ENCODE measurements at regions of chr20 and their contacts with region 1.

Region 1: GRCh38 chr20:24755411-24755922 is 193.6 kb upstream of the CST7 start:
- DNase-seq: peak; percentile 53
- H3K4me3 ChIP-seq: no peak overlapping the region
- H3K27ac ChIP-seq: peak overlapping the region; percentile 71
- H3K4me1 ChIP-seq: peaks cover 33% of the 10 kb centered on the region
- H3K27me3 ChIP-seq: no peaks in the 10 kb centered on the region
- CTCF ChIP-seq: no peak

Region 2: GRCh38 chr20:23890859-23891459 is 864.5 kb before region 1 on chr20:
- CTCF ChIA-PET with region 1: no interaction called
- POLR2A ChIA-PET with region 1: no interaction called
- intact Hi-C with region 1: no loop called
- DNase-seq: no peak
- H3K4me3 ChIP-seq: no peak overlapping the region
- H3K27ac ChIP-seq: no peak overlapping the region
- H3K4me1 ChIP-seq: no peaks in the 10 kb centered on the region
- H3K27me3 ChIP-seq: peaks cover 3% of the 10 kb centered on the region
- CTCF ChIP-seq: no peak

Region 3: DNA sequence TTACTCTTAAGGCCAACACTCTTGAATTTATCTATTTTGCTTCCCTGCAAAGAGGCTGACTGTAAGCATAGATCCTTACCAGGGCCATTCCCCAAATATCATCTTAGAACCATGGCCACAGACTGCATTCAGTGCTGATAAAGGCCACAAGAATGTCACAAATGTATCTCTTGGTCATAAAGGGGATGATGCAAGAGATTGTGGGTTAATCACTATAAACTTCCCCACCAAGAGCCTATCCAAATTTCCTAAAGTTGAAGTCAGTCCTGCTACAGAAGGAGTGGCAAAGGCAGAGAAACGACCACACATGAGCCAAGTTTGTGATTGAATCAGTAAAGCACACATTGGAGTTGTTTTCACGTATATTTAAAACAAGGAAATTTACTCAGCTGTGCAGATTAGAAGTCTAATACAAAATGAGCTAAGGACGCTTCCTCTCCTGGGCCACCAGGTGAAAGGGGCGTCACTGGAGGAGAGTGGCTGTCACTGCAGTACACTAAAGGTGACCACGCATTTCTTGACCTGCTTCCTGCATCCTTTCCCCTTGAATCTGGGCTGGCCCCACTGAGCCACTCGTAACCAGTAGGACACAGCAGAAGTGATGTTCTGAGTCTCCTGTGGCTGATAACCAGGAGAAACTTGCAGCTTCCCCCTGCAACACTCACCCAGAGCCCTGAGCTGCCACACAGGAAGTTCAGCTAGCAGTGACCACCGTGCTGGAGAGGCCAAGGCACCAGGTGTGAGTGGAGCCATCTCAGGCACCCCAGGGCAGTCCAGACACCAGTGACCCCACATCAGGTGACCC is 104.1 kb before region 1 on chr20:
- CTCF ChIA-PET with region 1: no interaction called
- POLR2A ChIA-PET with region 1: interaction called, 10 read pairs
- intact Hi-C with region 1: loop called (anchors 1 kb)
- DNase-seq: no peak
- H3K4me3 ChIP-seq: no peak overlapping the region
- H3K27ac ChIP-seq: peak overlapping the region; percentile 94
- H3K4me1 ChIP-seq: peaks cover 62% of the 10 kb centered on the region
- H3K27me3 ChIP-seq: no peaks in the 10 kb centered on the region
- CTCF ChIP-seq: no peak

Region 4: GRCh38 chr20:24795436-24795835 is 40.0 kb after region 1 on chr20:
- CTCF ChIA-PET with region 1: no interaction called
- POLR2A ChIA-PET with region 1: no interaction called
- intact Hi-C with region 1: no loop called
- DNase-seq: no peak
- H3K4me3 ChIP-seq: no peak overlapping the region
- H3K27ac ChIP-seq: no peak overlapping the region
- H3K4me1 ChIP-seq: no peaks in the 10 kb centered on the region
- H3K27me3 ChIP-seq: no peaks in the 10 kb centered on the region
- CTCF ChIP-seq: no peak